ACHN (cell line): ENCODE measurements at regions of chr12 and their contacts with region 1.

Region 1: DNA sequence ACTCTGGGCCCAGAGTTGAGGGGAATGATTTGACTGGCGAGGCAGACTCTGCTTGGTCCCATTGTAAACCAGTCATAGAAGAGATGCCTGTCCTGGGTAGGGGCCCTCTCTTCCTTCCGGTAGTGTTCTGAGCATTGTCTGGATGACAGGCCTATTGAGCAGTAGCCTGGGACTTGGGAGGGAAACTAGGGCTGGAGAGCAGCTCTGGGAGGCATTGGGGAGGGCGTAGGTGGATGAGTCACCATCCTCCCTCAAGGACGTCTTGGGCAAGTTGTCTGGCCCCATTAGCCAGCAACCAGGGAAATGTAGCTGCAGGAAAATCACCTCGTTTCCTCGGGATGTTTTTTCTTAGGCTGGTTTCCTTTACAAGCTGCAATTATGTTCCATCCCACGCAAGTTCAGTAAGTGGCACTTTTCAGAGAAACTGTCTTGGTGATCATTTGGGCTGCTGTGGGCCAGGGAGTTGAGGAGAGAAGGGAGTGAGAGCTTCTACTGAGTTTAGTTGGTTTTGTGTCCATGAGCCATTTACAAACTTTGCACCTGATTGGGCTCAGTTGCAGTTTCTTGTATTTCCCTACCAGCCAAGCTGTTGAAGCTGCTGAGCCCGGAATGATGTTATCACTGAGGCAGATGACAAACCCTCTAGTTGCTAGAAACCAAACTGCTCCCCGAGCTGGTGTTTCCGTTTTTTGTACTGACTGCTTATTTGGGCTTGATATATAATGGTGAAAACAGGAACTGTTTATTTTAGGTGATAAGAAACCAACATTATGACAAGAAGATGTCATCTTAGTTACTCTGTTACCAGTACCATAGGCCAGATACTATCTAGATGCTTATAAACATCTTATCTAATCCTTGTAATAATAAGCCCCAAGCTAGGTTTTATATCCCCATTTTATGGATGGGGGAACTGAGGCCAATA is 147.6 kb downstream of the CHST11 start:
- DNase-seq: peak; percentile 90

Region 2: GRCh38 chr12:104427011-104427461 is 177.3 kb before region 1 on chr12:
- in situ Hi-C with region 1: loop called (anchors 25 kb)
- DNase-seq: no peak